IMR-90 (cell line): ENCODE measurements at regions of chr2 and their contacts with region 1.

Region 1: GRCh38 chr2:65554765-65555591 is 122.6 kb upstream of the SPRED2 start:
- DNase-seq: peak; percentile 15
- ATAC-seq: peak; percentile 44; the same call in 1 of the 2 replicates
- H3K4me3 ChIP-seq: no peak overlapping the region
- H3K27ac ChIP-seq: no peak overlapping the region
- H3K4me1 ChIP-seq: 0 out of 2 replicates have a peak, but pooled peaks cover 2% of the 10 kb centered on the region
- H3K27me3 ChIP-seq: peaks cover 11% of the 10 kb centered on the region
- CTCF ChIP-seq: no peak
- POLR2A ChIP-seq: no peak
- RAD21 ChIP-seq: no peak

Region 2: DNA sequence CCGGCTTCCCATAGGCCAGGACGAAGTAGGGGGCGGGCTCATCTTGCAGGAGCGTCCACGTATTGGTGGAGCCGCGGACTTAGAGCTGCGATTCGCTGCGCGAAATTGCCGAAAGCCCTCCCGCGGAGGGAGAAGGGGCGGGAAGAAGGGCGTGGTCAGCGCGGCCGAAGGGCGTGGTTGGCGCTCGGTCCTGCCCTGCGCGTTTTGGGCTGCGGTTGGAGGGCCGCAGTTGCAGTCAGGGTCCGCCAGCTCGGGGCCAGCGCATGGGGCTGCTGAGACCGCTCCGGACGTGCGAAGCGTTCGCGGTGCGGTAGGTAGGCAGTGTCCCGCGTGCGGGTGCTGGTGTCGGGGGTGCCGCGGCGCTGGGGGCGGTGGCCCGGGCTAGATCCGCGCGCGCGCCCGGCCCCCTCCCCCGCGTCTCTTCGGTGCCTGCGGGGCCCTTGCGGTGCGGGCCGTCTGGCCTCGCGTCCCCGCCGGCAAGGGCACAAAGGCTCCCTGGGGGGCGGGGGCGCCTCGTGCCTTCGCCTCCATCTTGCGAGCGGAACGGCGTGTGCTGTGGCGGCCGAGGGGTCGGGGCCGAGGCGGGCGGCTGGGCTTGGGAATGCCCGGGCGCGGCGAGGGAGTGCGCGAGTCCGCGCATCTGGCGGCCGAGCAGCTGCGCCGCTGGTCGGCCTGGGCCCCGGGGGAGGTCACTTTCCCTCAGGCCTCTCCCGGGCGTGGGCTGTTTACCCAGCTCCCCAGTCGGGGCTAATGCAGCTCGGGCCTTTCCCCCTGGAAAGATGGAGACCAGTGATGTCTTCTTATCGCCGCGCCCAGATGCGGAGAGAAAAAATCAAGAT is 498.5 kb before region 1 on chr2 and contains the start of gene CEP68:
- CTCF ChIA-PET with region 1: no interaction called
- POLR2A ChIA-PET with region 1: no interaction called
- dilution Hi-C with region 1: no loop called
- in situ Hi-C with region 1: loop called (anchors 25 kb)
- intact Hi-C with region 1: no loop called
- DNase-seq: peak; percentile 97
- ATAC-seq: peak; percentile 98
- H3K4me3 ChIP-seq: peak within 1 kb of the TSS; percentile 63
- H3K27ac ChIP-seq: peak within 1 kb of the TSS; percentile 40
- H3K4me1 ChIP-seq: peaks cover 2% of the 10 kb centered on the region; the same call in 1 of the 2 replicates
- H3K27me3 ChIP-seq: no peaks in the 10 kb centered on the region
- CTCF ChIP-seq: no peak
- POLR2A ChIP-seq: peak; percentile 80
- RAD21 ChIP-seq: no peak
- total RNA-seq, gene CEP68: 5.3 and 5.6 TPM in 2 replicates

Region 3: GRCh38 chr2:65264821-65265670 is 289.9 kb before region 1 on chr2:
- CTCF ChIA-PET with region 1: interaction called, 6 read pairs
- POLR2A ChIA-PET with region 1: no interaction called
- dilution Hi-C with region 1: no loop called
- in situ Hi-C with region 1: no loop called
- intact Hi-C with region 1: loop called (anchors 1 kb)
- DNase-seq: peak; percentile 91
- ATAC-seq: peak; percentile 83
- H3K4me3 ChIP-seq: no peak overlapping the region
- H3K27ac ChIP-seq: no peak overlapping the region
- H3K4me1 ChIP-seq: peaks cover 8% of the 10 kb centered on the region
- H3K27me3 ChIP-seq: no peaks in the 10 kb centered on the region
- CTCF ChIP-seq: peak; percentile 77
- POLR2A ChIP-seq: 0 out of 2 replicates have a peak, but pooled peaks have one; percentile 28
- RAD21 ChIP-seq: peak; percentile 87

Region 4: GRCh38 chr2:65320042-65320725 is 234.8 kb before region 1 on chr2:
- CTCF ChIA-PET with region 1: no interaction called
- POLR2A ChIA-PET with region 1: no interaction called
- dilution Hi-C with region 1: no loop called
- in situ Hi-C with region 1: no loop called
- intact Hi-C with region 1: loop called (anchors 1 kb)
- DNase-seq: peak; percentile 98
- ATAC-seq: peak; percentile 83
- H3K4me3 ChIP-seq: peak overlapping the region; percentile 23; the same call in 1 of the 2 replicates
- H3K27ac ChIP-seq: peak overlapping the region; percentile 88
- H3K4me1 ChIP-seq: peaks cover 22% of the 10 kb centered on the region
- H3K27me3 ChIP-seq: no peaks in the 10 kb centered on the region
- CTCF ChIP-seq: peak; percentile 71
- POLR2A ChIP-seq: peak; percentile 38
- RAD21 ChIP-seq: peak; percentile 67